Activated CD4-positive, alpha-beta T cell treated with anti-CD3 and anti-CD28 coated beads for 36 hours (primary cell): ENCODE measurements at regions of chr10 and their contacts with region 1.

Region 1: GRCh38 chr10:119859420-119860258 is 13.0 kb downstream of the MCMBP start:
- DNase-seq: no peak
- ATAC-seq: no peak
- H3K4me3 Mint-ChIP-seq: no peak overlapping the region
- H3K27ac Mint-ChIP-seq: no peak overlapping the region
- H3K4me1 Mint-ChIP-seq: peaks cover 46% of the 10 kb centered on the region
- H3K27me3 Mint-ChIP-seq: no peaks in the 10 kb centered on the region

Region 2: DNA sequence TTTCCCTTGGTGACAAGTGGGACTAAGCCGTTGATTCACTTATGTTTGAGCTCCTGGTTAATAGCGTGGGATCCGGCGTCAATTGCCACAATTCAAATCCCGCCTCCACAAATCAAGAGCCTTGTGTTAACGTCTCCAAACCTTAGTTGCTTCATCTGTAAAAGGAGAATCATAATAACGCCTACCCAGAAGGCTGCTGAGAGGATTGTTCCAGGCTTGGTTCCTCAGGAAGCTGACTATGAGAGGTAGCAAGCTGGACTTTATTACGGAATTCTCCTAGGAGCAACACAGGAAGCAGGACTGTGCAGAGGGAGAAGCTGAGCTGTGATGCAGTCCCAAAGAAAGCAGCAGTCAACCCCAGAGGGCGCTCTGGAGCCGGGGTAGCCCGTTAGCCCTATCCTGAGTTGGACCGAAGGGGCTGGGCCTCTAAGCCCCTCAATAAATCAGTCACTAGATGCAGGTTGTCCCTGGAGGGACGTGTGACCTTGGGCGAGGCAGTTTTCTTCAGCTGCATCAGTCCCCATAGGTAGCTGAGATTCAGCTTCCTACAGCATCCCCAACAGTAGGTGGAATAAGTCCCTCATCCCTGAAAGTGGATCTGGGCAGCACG is 215.3 kb before region 1 on chr10:
- CTCF ChIA-PET with region 1: interaction called, 11 read pairs
- POLR2A ChIA-PET with region 1: no interaction called
- intact Hi-C with region 1: no loop called
- DNase-seq: no peak
- ATAC-seq: no peak
- H3K4me3 Mint-ChIP-seq: no peak overlapping the region
- H3K27ac Mint-ChIP-seq: no peak overlapping the region
- H3K4me1 Mint-ChIP-seq: peaks cover 20% of the 10 kb centered on the region
- H3K27me3 Mint-ChIP-seq: no peaks in the 10 kb centered on the region

Region 3: DNA sequence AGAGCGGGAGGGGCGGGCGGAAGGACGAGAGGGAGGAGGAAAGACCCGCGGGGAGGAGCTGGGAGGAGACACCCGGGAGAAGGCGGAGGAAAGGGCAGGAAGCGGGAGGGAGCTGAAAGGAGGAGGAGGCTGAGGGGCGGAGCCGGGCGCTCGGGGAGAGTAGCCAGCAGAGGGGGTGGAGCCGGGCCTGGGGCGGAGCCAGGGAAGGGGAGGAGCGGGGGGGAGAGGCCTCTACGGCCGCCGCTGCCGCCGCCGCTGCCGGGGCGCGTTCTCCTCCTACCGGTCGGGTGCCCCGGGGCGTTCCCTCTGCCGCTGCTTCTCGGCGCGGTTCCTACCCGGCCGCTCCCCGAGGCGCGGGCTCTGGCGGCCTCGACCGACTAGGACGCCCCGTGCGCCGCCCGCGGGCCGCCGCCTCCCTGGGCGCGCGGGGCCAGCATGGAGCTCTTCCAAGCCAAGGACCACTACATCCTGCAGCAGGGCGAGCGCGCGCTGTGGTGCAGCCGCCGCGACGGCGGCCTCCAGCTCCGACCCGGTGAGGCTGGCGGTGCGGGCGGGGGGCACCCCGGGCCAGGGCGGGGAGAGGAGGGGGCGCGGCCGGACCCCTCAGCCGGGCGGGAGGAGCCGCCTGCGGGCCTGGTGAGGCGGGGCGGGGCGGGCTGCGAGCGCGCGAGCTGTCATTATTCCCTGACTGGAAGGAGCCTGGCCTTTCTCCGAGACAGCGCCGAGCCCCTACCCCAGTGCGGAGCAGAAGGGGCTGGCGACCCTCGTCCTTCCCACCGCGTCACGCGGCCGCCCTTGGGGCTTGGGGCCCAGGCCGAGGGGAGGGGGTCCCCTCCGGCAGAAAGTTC is 133.6 kb before region 1 on chr10 and contains the start of gene INPP5F:
- CTCF ChIA-PET with region 1: interaction called, 11 read pairs
- POLR2A ChIA-PET with region 1: no interaction called
- intact Hi-C with region 1: no loop called
- DNase-seq: peak; percentile 100
- ATAC-seq: peak; percentile 95
- H3K4me3 Mint-ChIP-seq: peak within 1 kb of the TSS; percentile 86
- H3K27ac Mint-ChIP-seq: peak within 1 kb of the TSS; percentile 73
- H3K4me1 Mint-ChIP-seq: peaks cover 47% of the 10 kb centered on the region
- H3K27me3 Mint-ChIP-seq: no peaks in the 10 kb centered on the region
- total RNA-seq, gene INPP5F: 10.9 to 12.6 TPM

Region 4: DNA sequence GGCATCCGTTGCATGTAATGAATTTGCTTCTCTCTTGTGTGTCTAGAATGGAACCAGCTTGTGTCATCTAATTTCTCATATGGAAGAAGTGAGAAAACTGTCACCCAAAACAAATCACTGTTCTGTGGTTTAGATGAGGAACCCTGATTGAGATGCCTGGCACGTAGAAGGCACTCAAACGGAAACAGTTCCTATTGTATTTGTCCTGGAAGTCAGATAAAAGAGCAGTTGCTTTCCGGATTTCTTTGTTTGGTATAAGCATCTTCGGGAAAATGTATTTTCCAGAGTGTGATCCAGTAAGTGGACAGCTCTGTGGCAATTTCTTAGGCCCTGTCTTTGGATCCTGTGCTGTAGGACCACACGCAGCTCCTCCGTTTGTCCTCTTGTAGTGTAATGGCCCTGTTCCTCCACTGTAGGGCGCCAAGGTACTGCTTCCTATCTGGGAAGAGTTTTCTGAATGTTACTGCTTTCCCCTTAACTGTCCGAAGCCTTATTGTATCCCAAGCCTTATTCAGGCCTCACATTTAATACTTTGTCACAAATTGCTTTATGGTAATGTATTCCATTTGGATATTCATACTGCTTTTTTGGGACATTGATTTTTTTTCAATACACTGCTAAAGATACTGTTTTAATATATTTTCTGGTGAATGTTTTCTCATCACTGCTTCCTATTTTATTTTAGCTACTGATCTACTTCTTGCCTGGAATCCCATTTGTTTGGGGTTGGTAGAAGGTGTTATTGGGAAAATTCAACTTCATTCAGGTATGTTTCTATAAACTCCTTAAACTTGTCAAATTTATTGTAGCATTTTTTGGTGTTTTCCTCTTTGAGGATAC is 109.0 kb before region 1 on chr10:
- CTCF ChIA-PET with region 1: interaction called, 75 read pairs
- POLR2A ChIA-PET with region 1: interaction called, 5 read pairs
- intact Hi-C with region 1: loop called (anchors 1 to 2 kb)
- DNase-seq: peak; percentile 78
- ATAC-seq: peak; percentile 94
- H3K4me3 Mint-ChIP-seq: peak overlapping the region; percentile 5
- H3K27ac Mint-ChIP-seq: peak overlapping the region; percentile 71
- H3K4me1 Mint-ChIP-seq: peaks cover 7% of the 10 kb centered on the region
- H3K27me3 Mint-ChIP-seq: no peaks in the 10 kb centered on the region

Region 5: GRCh38 chr10:119849031-119849789 is 10.4 kb before region 1 on chr10:
- CTCF ChIA-PET with region 1: interaction called, 14 read pairs
- POLR2A ChIA-PET with region 1: interaction called, 5 read pairs
- intact Hi-C with region 1: no loop called
- DNase-seq: no peak
- ATAC-seq: no peak
- H3K4me3 Mint-ChIP-seq: no peak overlapping the region
- H3K27ac Mint-ChIP-seq: no peak overlapping the region
- H3K4me1 Mint-ChIP-seq: no peaks in the 10 kb centered on the region
- H3K27me3 Mint-ChIP-seq: no peaks in the 10 kb centered on the region

Region 6: GRCh38 chr10:120161111-120161510 is 301.5 kb after region 1 on chr10:
- CTCF ChIA-PET with region 1: no interaction called
- POLR2A ChIA-PET with region 1: no interaction called
- intact Hi-C with region 1: no loop called
- DNase-seq: no peak
- ATAC-seq: no peak
- H3K4me3 Mint-ChIP-seq: no peak overlapping the region
- H3K27ac Mint-ChIP-seq: no peak overlapping the region
- H3K4me1 Mint-ChIP-seq: no peaks in the 10 kb centered on the region
- H3K27me3 Mint-ChIP-seq: peaks cover 2% of the 10 kb centered on the region